Posterior cingulate gyrus (tissue), 11 donors: ENCODE measurements at regions of chr4 and their contacts with region 1.

Region 1: GRCh38 chr4:10018818-10019461 is 2.4 kb downstream of the SLC2A9 start:
- DNase-seq: peak; percentile 81 to 99 (median 93)

Region 2: GRCh38 chr4:9704551-9705332 is 314.2 kb before region 1 on chr4:
- intact Hi-C with region 1: loop called (anchors 2 kb)
- DNase-seq: no peak

Region 3: DNA sequence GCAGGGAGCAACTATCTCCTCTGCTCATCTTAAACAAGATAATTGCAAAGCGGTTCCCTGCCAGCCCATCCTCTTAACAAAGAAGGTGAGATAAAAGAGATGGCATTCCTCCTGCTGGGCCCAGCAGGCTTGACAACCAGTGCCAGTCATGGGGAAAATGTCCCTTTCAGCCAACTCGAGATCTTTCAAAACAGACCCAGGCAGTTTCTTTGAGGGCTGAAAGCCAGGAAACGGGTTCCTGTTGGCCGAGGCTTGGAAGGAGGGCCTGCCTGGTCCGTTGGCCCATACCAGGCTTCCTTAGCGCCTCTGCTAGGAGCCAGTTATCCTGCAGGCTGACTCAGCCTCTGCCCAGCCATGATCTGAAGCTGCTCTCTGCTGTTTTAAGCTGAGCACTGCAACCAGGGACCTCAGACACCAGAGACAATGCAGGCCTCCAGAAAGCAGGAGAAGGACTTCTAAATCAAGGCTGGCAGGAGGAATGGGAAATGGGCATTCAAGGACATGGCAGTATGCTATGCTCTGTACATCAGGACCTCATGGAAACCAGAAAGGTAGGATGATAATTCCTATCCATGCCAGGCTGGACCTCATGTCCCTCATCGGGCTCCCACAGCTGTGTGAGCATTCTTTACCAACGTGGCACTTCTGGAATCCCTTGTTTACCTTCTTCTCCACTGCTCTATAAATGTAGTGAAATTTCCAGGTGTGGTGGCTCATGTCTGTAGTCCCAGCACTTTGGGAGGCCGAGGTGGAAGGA is 44.8 kb after region 1 on chr4:
- intact Hi-C with region 1: loop called (anchors 1 kb)
- DNase-seq: peak; percentile 46 to 96 (median 72)

Region 4: GRCh38 chr4:10116580-10117358 is 97.8 kb after region 1 on chr4 and contains the start of gene WDR1:
- intact Hi-C with region 1: loop called (anchors 5 kb)
- DNase-seq: peak; percentile 83 to 99 (median 95)